ENCODE measurements at regions of chr4 and their contacts with region 1.

Region 1: DNA sequence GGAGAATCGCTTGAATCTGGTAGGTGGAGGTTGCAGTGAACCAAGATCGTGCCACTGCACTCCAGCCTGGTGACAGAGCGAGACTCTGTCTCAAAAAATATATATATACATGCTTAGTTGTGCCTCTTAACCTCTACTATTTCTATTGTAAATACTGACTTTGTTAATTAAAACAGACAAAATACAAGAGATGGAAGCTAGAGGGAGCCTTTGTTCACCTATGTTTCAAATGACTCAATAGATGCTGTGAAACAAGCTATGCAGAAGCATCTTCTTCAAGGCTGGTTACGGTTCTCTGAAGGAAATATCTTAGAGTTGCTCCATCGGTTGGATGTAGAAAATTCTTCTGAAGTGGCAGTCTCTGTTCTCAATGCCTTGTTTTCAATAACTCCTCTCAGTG is 6.2 kb downstream of the NCAPG start:
- DNase-seq: peak; percentile 41
- ATAC-seq: peak; percentile 83
- H3K4me3 ChIP-seq: no peak overlapping the region
- H3K27ac ChIP-seq: no peak overlapping the region
- H3K4me1 ChIP-seq: no peaks in the 10 kb centered on the region
- H3K27me3 ChIP-seq: no peaks in the 10 kb centered on the region; a peak in 1 of 4 replicates
- CTCF ChIP-seq: peak; percentile 37 to 63 (median 61); a peak in 5 of 6 replicates
- EP300 ChIP-seq: no peak
- POLR2A ChIP-seq: no peak
- RAD21 ChIP-seq: peak; percentile 82

Region 2: GRCh38 chr4:17846266-17846665 is 29.2 kb after region 1 on chr4:
- CTCF ChIA-PET with region 1: interaction called, 25 read pairs
- POLR2A ChIA-PET with region 1: no interaction called
- RAD21 ChIA-PET with region 1: interaction called, 3 read pairs
- SMC1A ChIA-PET with region 1: interaction called, 3 read pairs
- in situ Hi-C with region 1: no loop called
- intact Hi-C with region 1: no loop called
- DNase-seq: no peak
- ATAC-seq: no peak
- H3K4me3 ChIP-seq: no peak overlapping the region
- H3K27ac ChIP-seq: no peak overlapping the region
- H3K4me1 ChIP-seq: no peaks in the 10 kb centered on the region
- H3K27me3 ChIP-seq: no peaks in the 10 kb centered on the region
- CTCF ChIP-seq: no peak
- EP300 ChIP-seq: no peak
- POLR2A ChIP-seq: no peak
- RAD21 ChIP-seq: no peak

Region 3: GRCh38 chr4:18021722-18022571 is 204.9 kb after region 1 on chr4 and contains the start of gene LCORL:
- CTCF ChIA-PET with region 1: interaction called, 9 read pairs
- POLR2A ChIA-PET with region 1: interaction called, 6 read pairs
- RAD21 ChIA-PET with region 1: interaction called, 9 read pairs
- SMC1A ChIA-PET with region 1: interaction called, 12 read pairs
- in situ Hi-C with region 1: loop called (anchors 10 kb)
- intact Hi-C with region 1: no loop called
- DNase-seq: peak; percentile 90
- ATAC-seq: peak; percentile 87
- H3K4me3 ChIP-seq: peak within 1 kb of the TSS; percentile 90
- H3K27ac ChIP-seq: peak within 1 kb of the TSS; percentile 84
- H3K4me1 ChIP-seq: no peaks in the 10 kb centered on the region; the same call in 1 of the 2 replicates
- H3K27me3 ChIP-seq: no peaks in the 10 kb centered on the region
- CTCF ChIP-seq: peak; percentile 29 to 45 (median 35); a peak in 4 of 6 replicates
- EP300 ChIP-seq: no peak
- POLR2A ChIP-seq: peak; percentile 77
- RAD21 ChIP-seq: peak; percentile 43; the same call in 1 of the 2 replicates
- polyA plus RNA-seq, gene LCORL: 2.2 to 3.3 TPM